Ascending aorta (tissue), 2 donors: ENCODE measurements at regions of chr3 and their contacts with region 1.

Region 1: DNA sequence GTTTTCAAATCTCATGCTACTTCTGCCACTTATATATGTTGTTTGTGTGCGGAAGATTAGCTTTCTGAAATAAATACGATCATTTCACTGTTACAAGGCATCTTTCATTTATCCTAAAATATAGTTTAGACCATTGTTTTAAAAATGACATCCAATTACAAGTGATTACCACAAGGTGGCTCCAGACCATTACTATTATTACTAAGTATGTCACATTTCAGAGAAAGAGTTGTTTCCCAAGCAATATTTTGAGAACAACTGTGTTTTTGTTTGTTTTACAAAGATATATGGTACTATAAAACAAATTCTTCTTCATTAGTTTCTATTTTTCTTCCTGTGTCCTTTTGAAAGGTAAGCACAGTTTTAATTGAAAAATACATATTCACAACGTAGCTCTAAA is 136.0 kb upstream of the RAP2B start:
- DNase-seq: no peak
- H3K4me3 ChIP-seq: no peak overlapping the region
- H3K27ac ChIP-seq: no peak overlapping the region
- H3K4me1 ChIP-seq: no peaks in the 10 kb centered on the region
- H3K27me3 ChIP-seq: no peaks in the 10 kb centered on the region
- CTCF ChIP-seq: peak; percentile 3 to 59 (median 45)

Region 2: GRCh38 chr3:153768561-153769469 is 742.8 kb after region 1 on chr3:
- intact Hi-C with region 1: loop called (anchors 5 kb)
- DNase-seq: no peak
- H3K4me3 ChIP-seq: no peak overlapping the region
- H3K27ac ChIP-seq: no peak overlapping the region
- H3K4me1 ChIP-seq: no peaks in the 10 kb centered on the region
- H3K27me3 ChIP-seq: no peaks in the 10 kb centered on the region
- CTCF ChIP-seq: peak; percentile 50 to 70 (median 59)